B cell (primary cell): ENCODE measurements at regions of chr14 and their contacts with region 1.

Region 1: DNA sequence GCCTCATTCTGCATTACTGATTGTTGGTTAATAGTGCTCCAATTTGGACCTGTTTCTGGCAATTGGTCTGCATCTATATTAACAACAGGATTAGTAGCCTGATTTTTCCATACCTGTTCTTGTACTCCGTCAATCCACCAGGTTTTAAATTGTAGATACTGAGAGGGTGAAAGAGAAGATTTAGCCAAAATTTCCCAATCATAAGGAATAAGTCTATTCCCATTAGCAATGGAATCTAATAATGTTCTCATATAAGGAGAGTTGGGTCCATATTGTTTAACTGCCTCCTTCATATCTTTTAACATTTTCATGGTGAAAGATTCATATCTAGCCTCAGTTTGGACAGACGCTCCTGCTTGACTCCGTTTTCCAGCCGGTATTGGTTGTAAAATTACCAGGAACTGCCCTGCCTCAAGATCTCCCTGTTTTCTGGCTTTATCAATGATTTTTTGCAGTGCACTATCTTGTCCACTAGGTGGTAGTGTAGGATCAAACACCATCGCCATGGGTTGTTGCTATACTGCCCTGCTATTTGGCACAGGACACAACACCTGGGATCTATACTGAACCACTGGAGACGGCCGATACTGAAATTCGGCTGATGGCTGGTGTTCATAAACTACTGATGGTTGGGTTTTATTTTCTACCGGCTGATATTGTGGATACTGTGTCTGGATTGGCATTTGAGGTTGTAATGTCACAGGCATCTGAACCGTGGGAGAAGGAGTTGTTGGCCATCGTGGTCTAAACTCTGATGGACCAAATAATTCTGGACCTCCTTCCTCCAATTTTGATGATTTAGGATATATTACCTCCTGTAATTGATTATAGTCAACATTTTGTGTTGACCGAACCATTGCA is 25.2 kb downstream of the DHRS4L2 start:
- DNase-seq: peak; percentile 83
- ATAC-seq: peak; percentile 92
- H3K4me3 ChIP-seq: no peak overlapping the region
- H3K4me3 Mint-ChIP-seq: no peak overlapping the region
- H3K27ac ChIP-seq: no peak overlapping the region
- H3K27ac Mint-ChIP-seq: no peak overlapping the region
- H3K4me1 ChIP-seq: peaks cover 0 to 3% of the 10 kb centered on the region in 2 donors
- H3K4me1 Mint-ChIP-seq: peaks cover 30% of the 10 kb centered on the region
- H3K27me3 ChIP-seq: no peaks in the 10 kb centered on the region
- H3K27me3 Mint-ChIP-seq: no peaks in the 10 kb centered on the region
- CTCF ChIP-seq: peak; percentile 97

Region 2: GRCh38 chr14:23926543-23926942 is 87.3 kb before region 1 on chr14:
- CTCF ChIA-PET with region 1: no interaction called
- POLR2A ChIA-PET with region 1: no interaction called
- intact Hi-C with region 1: no loop called
- DNase-seq: no peak
- ATAC-seq: no peak
- H3K4me3 ChIP-seq: no peak overlapping the region
- H3K4me3 Mint-ChIP-seq: no peak overlapping the region
- H3K27ac ChIP-seq: no peak overlapping the region
- H3K27ac Mint-ChIP-seq: no peak overlapping the region
- H3K4me1 ChIP-seq: no peaks in the 10 kb centered on the region
- H3K4me1 Mint-ChIP-seq: no peaks in the 10 kb centered on the region
- H3K27me3 ChIP-seq: no peaks in the 10 kb centered on the region
- H3K27me3 Mint-ChIP-seq: peaks cover 5% of the 10 kb centered on the region
- CTCF ChIP-seq: no peak

Region 3: DNA sequence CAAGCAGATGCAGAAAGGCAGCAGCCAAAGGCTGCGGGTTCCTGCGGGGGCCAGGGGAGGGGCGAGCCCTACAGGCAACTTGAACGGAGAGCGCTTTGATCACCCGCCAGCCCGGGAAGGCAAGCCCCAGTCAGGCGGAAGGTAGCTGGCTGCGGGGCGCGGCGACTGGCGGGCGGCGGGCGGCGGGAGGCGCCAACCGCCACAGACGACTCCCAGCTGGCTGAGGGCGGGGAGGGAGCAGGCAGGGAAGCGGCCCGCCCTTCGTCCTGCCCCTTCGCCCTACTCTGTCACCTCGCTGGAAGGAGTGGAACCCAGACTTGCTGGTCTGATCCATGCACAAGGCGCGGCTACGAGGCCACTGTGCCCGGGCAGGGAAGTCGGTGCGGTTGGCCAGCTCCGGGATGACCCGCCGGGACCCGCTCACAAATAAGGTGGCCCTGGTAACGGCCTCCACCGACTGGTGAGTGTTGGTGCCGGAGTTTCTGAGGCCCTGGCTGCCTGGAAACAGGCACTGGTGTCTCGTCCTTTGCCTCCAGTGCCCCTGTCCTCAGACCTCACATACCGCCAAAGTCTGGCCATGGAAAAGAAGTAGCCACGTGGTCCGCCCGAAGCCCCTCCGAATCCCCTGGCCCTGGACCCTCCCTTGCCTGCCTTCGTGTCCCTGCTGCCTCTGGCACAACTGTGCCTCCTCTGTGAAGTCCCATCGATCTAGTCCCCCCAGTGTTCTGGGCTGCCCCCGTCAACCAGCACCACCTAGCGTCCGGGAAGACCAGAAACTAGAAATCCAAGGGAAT is 22.5 kb after region 1 on chr14:
- CTCF ChIA-PET with region 1: interaction called, 5 read pairs
- POLR2A ChIA-PET with region 1: no interaction called
- intact Hi-C with region 1: loop called (anchors 1 kb)
- DNase-seq: peak; percentile 75
- ATAC-seq: peak; percentile 92
- H3K4me3 ChIP-seq: peak overlapping the region; percentile 34 to 77 (median 59)
- H3K4me3 Mint-ChIP-seq: peak overlapping the region; percentile 98
- H3K27ac ChIP-seq: peak overlapping the region; percentile 33 to 38
- H3K27ac Mint-ChIP-seq: peak overlapping the region; percentile 87
- H3K4me1 ChIP-seq: peaks cover 0 to 9% of the 10 kb centered on the region in 2 donors
- H3K4me1 Mint-ChIP-seq: peaks cover 10% of the 10 kb centered on the region
- H3K27me3 ChIP-seq: no peaks in the 10 kb centered on the region
- H3K27me3 Mint-ChIP-seq: no peaks in the 10 kb centered on the region
- CTCF ChIP-seq: peak; percentile 68

Region 4: DNA sequence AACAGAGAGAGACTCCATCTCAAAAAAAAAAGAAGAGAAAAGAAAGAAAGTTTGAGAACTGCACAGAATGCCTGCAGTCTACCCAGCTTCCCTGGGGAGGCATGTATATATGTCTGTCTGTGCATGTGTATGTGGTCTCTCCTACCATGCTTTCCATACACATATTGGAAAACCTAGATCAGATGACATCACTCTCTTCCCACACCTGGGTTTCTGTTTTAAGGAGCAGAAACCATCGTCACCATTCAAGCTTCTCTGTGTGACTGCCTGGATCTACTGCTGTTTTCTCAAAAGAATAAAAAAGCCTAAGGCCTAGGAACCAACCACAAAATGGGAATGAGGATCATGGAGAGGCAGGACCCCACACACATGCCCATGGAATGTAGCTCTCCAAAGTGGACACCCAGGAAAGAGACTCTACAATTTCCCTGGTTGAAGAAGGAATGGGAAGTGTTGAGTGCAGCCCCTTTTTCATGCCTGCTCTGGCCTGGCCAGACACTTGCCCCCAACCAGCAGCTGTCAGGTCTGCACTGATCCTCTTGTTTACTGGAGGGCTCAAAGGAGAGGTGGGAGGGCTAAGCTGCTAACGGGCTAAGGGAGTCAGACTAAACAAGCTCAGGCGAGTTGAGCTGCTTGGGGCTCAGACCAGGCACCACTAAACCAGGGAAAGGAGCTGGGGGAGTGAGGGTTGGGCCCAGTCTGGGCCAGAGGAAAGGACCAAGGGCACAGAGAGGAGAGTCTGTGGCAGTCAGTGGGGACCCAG is 72.5 kb after region 1 on chr14:
- CTCF ChIA-PET with region 1: interaction called, 13 read pairs
- POLR2A ChIA-PET with region 1: no interaction called
- intact Hi-C with region 1: loop called (anchors 1 kb)
- DNase-seq: no peak
- ATAC-seq: no peak
- H3K4me3 ChIP-seq: no peak overlapping the region
- H3K4me3 Mint-ChIP-seq: no peak overlapping the region
- H3K27ac ChIP-seq: no peak overlapping the region
- H3K27ac Mint-ChIP-seq: no peak overlapping the region
- H3K4me1 ChIP-seq: peaks cover 5 to 16% of the 10 kb centered on the region in 2 donors
- H3K4me1 Mint-ChIP-seq: peaks cover 17% of the 10 kb centered on the region
- H3K27me3 ChIP-seq: no peaks in the 10 kb centered on the region
- H3K27me3 Mint-ChIP-seq: no peaks in the 10 kb centered on the region
- CTCF ChIP-seq: no peak

Region 5: DNA sequence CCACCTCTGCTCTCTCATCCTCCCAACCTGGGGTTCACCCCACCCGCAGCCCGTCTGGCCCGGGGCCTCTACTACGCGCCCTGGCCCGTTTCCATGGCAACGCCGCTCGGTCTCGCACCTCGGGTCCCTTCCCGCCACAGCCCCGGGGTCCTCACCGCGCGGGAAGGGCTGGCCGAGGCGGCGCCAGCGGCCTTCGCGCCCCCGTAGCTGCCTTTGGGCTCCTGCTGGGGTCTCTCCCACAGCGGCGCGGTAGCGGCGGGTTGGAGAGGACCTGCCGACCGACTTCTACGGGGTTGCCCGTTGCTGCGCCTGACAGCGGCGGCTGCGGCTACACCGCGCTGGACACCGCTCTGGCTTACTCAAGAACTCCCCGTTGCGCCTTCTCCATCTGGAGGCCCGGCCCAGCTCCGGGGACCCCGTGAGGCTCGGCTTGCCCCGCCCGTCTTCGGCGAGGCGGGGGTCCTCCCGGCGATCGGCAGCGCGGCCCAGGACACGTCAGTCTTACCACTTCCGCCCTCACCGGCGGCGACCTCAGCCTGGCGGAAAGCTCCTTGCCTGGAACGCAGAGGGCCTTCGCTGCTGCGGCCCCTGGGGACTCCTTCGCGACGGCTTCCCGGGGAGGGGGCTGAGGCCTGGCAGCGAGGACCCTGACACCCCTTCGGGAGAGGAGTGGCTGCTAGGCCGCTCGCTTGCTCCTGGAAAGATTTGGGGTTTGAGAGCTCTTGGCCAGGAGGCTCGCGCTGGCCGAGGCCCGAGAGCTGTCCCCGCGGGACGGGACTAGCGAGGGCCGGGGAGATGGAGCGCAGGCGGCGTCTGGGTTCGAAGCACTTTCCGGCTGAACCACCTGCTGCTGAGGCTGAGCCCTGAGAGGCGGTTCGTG is 181.5 kb after region 1 on chr14 and contains the start of gene TM9SF1:
- CTCF ChIA-PET with region 1: no interaction called
- POLR2A ChIA-PET with region 1: no interaction called
- intact Hi-C with region 1: loop called (anchors 1 kb)
- DNase-seq: peak; percentile 96
- ATAC-seq: peak; percentile 90
- H3K4me3 ChIP-seq: peak within 1 kb of the TSS; percentile 82 to 99 (median 83)
- H3K4me3 Mint-ChIP-seq: peak within 1 kb of the TSS; percentile 89
- H3K27ac ChIP-seq: peak within 1 kb of the TSS; percentile 98 to 99
- H3K27ac Mint-ChIP-seq: peak within 1 kb of the TSS; percentile 99
- H3K4me1 ChIP-seq: peaks cover 25 to 26% of the 10 kb centered on the region in 2 donors
- H3K4me1 Mint-ChIP-seq: peaks cover 49% of the 10 kb centered on the region
- H3K27me3 ChIP-seq: no peaks in the 10 kb centered on the region
- H3K27me3 Mint-ChIP-seq: no peaks in the 10 kb centered on the region
- CTCF ChIP-seq: no peak
- total RNA-seq, gene TM9SF1: 24.5 and 33.9 TPM in 2 replicates